Endothelial cell of umbilical vein (primary cell): ENCODE measurements at regions of chr11 and their contacts with region 1.

Region 1: GRCh38 chr11:102802341-102802740 is 4.4 kb upstream of the MMP1 start:
- DNase-seq: peak; percentile 30
- H3K4me3 ChIP-seq: no peak overlapping the region
- H3K27ac ChIP-seq: peak overlapping the region; percentile 39
- H3K4me1 ChIP-seq: peaks cover 29% of the 10 kb centered on the region
- H3K27me3 ChIP-seq: peaks cover 3 to 10% of the 10 kb centered on the region in 2 experiments
- CTCF ChIP-seq: no peak
- POLR2A ChIP-seq: no peak

Region 2: DNA sequence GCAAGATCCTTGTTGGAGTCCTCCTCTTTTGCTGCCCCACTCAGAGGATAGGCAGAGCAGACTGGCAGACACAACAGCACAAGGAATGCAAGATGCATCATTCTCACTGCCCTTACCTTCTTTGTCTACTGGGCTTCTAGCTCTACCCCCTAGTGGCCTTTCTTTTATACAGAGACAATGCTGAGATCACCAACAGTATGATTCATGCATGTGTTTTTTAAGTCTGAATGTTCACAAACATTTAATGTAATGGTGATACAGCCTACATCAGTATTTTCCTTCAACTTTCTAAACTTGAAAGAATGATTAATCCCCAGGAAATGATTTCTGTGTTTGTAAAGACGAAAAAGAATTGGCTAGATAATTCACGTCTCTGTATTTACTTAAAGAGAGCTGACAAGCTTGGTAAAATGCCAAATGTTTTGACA is 21.8 kb before region 1 on chr11 and contains the start of gene MMP10:
- CTCF ChIA-PET with region 1: interaction called, 13 read pairs
- POLR2A ChIA-PET with region 1: no interaction called
- dilution Hi-C with region 1: no loop called
- intact Hi-C with region 1: loop called (anchors 1 kb)
- DNase-seq: peak; percentile 89
- H3K4me3 ChIP-seq: peak within 1 kb of the TSS in 1 of 3 experiments; percentile 15
- H3K27ac ChIP-seq: peak within 1 kb of the TSS; percentile 76
- H3K4me1 ChIP-seq: peaks cover 14% of the 10 kb centered on the region
- H3K27me3 ChIP-seq: no peaks in the 10 kb centered on the region
- CTCF ChIP-seq: peak; percentile 61 to 63
- POLR2A ChIP-seq: no peak
- total RNA-seq, gene MMP10: 15.0 and 22.8 TPM in 2 replicates

Region 3: GRCh38 chr11:102864724-102865123 is 62.4 kb after region 1 on chr11:
- CTCF ChIA-PET with region 1: no interaction called
- POLR2A ChIA-PET with region 1: no interaction called
- dilution Hi-C with region 1: no loop called
- intact Hi-C with region 1: no loop called
- DNase-seq: no peak
- H3K4me3 ChIP-seq: no peak overlapping the region
- H3K27ac ChIP-seq: no peak overlapping the region
- H3K4me1 ChIP-seq: no peaks in the 10 kb centered on the region
- H3K27me3 ChIP-seq: peaks cover 3 to 9% of the 10 kb centered on the region in 2 experiments
- CTCF ChIP-seq: no peak
- POLR2A ChIP-seq: no peak

Region 4: DNA sequence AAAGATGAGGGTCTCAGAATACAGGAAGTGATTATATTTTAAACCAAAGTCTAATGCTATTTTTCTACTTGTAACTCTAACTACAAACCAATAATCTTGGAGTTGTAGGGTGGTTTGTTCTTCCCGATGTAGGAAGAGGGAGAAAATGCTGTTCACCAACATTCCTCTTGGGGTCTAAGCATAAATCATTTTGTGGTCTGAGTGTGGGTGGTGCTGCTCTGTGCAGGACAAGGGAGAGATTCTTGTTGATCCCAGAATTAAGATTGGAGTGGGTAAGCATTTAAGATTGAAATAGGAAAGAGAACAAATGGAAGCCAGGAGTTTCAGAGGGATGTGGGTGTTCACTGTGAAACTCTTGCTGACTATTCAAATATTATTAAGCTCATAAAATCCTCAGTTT is 191.8 kb after region 1 on chr11:
- CTCF ChIA-PET with region 1: no interaction called
- POLR2A ChIA-PET with region 1: no interaction called
- dilution Hi-C with region 1: no loop called
- intact Hi-C with region 1: loop called (anchors 1 kb)
- DNase-seq: no peak
- H3K4me3 ChIP-seq: no peak overlapping the region
- H3K27ac ChIP-seq: no peak overlapping the region
- H3K4me1 ChIP-seq: peaks cover 37% of the 10 kb centered on the region
- H3K27me3 ChIP-seq: no peaks in the 10 kb centered on the region
- CTCF ChIP-seq: no peak
- POLR2A ChIP-seq: no peak